ENCODE measurements at regions of chr13 and their contacts with region 1.

Region 1: DNA sequence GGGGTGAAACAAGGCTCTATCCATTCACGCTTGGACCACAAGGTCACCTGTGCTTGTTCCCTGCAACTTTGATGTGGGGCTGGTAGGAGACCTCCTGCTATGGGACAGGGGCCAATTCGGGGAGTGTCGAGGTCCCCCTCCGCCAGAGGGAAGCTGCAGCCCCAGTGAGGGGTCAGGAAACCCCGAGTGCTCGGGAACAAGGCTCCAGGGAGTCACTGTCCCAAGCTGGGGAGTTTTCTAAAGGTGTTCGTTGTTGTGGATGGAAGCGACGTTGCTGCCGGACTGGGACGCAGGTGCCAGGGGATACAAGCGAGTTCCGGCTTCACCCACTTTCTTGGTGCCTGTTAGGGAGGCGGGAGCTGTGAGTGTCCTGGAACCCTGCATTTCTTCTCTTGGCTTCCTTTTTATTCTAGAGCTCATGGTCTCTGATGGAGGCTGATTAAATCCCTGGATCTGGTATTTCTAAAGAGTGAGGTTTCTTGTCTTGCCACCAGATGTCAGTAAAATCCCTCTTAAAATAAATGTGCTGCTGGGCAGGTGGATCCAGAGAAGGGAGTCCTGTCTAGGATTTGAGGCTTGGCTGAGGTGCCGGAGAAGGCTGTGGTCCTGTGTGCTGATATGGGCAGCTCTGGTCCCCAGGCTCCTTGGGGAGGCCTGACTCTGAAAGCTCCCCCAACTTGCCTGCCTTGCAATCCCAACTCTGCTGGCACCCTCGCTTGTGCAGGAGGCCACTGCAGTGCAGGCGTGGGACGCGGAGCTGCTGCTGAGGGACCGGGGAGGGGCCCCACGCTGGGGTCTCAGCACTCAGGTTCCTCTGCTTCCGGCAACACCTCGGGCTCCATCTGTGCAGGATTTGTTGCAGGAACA is 153.9 kb downstream of the TEX29 start:
- DNase-seq: peak; percentile 20 to 60 (median 52)
- H3K4me3 ChIP-seq: no peak overlapping the region
- H3K27ac ChIP-seq: no peak overlapping the region
- H3K4me1 ChIP-seq: no peaks in the 10 kb centered on the region
- H3K27me3 ChIP-seq: peaks cover 0 to 5% (median 0%) of the 10 kb centered on the region in 5 experiments

Region 2: DNA sequence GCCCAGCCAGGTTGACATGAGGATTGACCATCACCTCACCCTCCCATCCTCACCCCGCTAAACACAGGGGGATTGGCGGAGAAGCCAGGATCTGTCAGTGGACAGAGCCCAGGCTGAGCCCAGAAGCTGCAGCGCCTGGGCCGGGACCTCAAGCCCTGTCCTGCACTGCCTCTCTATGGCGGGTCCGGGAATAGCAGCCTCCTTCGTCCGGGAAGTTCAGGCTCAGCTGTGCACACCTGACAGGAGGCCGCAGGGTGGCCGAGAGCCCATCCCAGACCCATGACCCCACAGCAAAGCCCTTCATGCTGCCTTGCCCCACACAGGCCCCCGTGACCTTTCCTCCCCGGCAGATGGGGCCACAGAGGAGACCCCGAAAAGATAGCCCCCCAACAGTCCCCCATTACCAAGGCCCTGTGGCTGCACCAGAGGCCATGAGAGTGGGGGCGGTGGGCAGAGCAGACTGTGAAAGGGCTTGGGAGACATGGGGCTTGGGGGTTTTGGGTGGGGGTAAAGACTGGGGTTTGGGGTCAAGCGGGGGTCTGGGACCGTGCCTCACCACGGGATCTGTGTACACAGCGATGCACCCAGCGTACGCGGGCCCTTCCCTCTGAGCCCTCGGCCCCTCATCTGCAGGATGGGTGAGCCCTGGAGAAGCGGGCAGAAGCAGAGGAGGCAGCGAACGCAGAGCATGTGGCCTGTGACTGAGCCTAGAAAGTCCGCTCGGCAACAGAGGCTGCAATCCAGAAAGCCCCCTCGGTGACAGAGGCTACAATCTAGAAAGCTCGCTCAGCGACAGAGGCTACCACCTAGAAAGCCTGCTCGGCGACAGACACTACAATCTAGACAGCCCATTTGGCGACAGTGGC is 969.9 kb after region 1 on chr13:
- CTCF ChIA-PET with region 1: interaction called, 33 read pairs
- POLR2A ChIA-PET with region 1: no interaction called
- DNase-seq: peak; percentile 24 to 56 (median 49)
- H3K4me3 ChIP-seq: no peak overlapping the region
- H3K27ac ChIP-seq: no peak overlapping the region
- H3K4me1 ChIP-seq: no peaks in the 10 kb centered on the region
- H3K27me3 ChIP-seq: peaks cover 0 to 64% (median 11%) of the 10 kb centered on the region in 5 experiments